ENCODE measurements at regions of chr11 and their contacts with region 1.

Region 1: DNA sequence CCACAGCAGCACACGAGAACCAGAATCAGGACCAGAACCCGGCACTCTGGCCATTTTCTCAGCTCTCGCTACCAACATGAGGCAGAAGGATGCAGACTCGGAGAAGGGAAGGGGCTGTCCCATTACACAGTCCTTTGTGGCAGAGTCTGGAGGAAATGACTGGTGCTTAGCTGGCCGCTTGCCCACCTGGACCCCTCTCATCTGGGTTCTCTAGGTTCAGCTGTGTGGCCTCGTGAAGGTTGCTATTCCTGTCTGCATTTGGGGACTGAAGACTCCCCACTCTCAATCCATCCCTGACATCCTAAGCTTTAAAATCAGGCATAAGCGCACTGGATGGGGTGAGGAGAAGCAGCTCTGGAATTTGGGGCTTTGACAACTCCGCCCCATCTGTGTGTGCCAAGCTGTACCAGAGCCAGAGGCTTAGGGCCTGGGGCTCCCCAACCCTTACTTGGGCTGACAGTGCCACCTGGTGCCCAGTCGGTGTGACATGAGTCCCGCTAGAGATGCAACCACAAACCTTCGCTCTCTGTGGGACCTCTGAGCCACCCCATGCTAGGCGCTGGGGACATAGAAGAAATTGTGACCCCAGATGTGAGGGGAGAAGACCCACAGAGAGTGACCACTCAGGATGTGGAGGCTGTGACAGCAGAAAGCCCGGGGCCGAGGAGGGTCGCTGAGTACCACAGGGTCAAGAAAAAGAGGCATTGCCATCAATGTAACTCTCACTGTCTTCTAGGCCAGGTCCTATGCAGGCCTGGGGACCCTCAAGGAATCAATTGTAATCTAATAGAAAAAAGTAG is 35.9 kb upstream of the FCHSD2 start:
- DNase-seq: peak; percentile 82
- H3K4me3 Mint-ChIP-seq: no peak overlapping the region
- H3K27ac Mint-ChIP-seq: no peak overlapping the region
- H3K4me1 Mint-ChIP-seq: peaks cover 13% of the 10 kb centered on the region
- H3K27me3 Mint-ChIP-seq: peaks cover 18% of the 10 kb centered on the region
- CTCF ChIP-seq: peak; percentile 76

Region 2: DNA sequence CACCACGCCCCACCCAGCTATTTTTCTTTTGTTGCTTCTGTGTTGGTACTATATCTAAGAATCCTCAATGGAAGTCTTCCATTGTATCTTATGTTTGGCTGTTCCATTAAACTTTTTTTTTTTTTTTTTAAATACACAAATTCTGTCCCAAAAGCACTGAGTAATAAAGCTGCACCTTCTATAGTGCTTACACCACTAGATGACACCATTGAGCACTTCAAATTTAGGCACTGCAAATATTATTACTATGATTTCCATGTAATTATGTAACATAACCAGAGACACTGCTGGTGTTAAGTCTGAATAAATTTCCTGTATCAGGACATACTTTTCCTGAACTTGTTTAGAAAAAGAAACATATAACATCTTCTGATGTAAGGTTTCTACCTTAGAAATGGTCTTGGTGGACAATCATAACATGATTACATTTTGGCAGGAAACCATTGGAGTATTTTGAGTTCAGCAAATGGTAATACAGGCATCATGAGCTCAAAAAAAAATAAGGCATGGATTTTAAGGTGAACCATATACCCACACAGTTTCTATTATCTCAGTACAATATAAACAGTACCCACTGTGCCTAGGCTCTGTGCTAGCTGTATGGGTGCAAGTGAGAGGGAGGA is 253.3 kb before region 1 on chr11:
- CTCF ChIA-PET with region 1: interaction called, 23 read pairs
- intact Hi-C with region 1: loop called (anchors 1 kb)
- DNase-seq: no peak
- H3K4me3 Mint-ChIP-seq: no peak overlapping the region
- H3K27ac Mint-ChIP-seq: no peak overlapping the region
- H3K4me1 Mint-ChIP-seq: no peaks in the 10 kb centered on the region
- H3K27me3 Mint-ChIP-seq: no peaks in the 10 kb centered on the region
- CTCF ChIP-seq: no peak

Region 3: GRCh38 chr11:73307323-73308002 is 129.5 kb after region 1 on chr11:
- CTCF ChIA-PET with region 1: no interaction called
- intact Hi-C with region 1: no loop called
- DNase-seq: peak; percentile 97
- H3K4me3 Mint-ChIP-seq: peak overlapping the region; percentile 73
- H3K27ac Mint-ChIP-seq: peak overlapping the region; percentile 63
- H3K4me1 Mint-ChIP-seq: peaks cover 8% of the 10 kb centered on the region
- H3K27me3 Mint-ChIP-seq: peaks cover 4% of the 10 kb centered on the region
- CTCF ChIP-seq: peak; percentile 84